Activated CD4-positive, alpha-beta T cell treated with anti-CD3 and anti-CD28 coated beads, Interleukin-2, amount 10 ng/mL, durations not matched to agents 7 days and 5 days (primary cell): ENCODE measurements at regions of chr12 and their contacts with region 1.

Region 1: GRCh38 chr12:54032627-54033100 is at the start of gene HOXC5:
- DNase-seq: peak; percentile 67
- H3K4me3 Mint-ChIP-seq: peak within 1 kb of the TSS; percentile 32
- H3K27ac Mint-ChIP-seq: peak within 1 kb of the TSS; percentile 28
- H3K4me1 Mint-ChIP-seq: peaks cover 27% of the 10 kb centered on the region
- H3K27me3 Mint-ChIP-seq: peaks cover 86% of the 10 kb centered on the region
- total RNA-seq, gene HOXC5: not detected

Region 2: DNA sequence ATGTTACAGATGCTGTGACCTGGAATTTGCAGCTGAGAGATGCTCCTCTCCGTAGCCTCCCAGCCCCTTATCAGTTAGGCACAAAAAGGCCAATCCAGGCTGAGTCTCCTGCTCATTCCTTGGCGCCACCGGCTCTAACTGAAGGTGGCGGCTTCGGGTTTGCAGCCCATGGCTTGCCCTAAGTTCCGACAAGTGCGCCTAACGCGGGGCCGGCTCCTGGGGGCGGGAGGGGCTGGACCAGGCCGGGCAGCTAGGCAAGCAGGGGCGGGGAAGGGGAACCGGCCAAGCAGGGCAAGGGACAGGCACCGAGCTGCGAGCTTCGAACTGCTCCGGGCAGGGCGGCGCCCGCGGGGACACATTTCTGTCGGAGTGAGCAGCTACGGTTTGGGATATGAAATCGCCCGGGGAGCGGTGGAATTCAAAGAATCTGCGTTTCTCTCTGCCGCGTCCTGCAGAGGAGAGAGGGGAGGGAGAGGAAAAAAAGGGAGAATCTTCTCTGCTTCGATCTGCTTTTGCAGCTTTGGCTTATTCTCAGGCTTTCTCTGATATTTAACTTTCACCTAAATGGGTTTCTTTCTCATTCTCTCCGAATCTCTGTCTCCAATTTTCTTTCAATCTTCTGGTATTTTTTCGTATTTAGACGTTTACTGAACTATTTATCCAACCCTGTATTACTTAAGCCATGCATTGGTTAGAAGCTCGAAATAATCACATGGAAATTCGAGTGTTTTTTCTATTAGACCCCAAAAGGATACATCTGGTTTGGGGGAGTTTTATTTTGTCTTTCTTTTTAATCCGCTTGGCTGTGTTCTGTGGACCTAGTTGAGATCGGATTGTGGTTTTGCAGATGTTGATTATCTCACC is 79.6 kb before region 1 on chr12:
- CTCF ChIA-PET with region 1: interaction called, 10 read pairs
- POLR2A ChIA-PET with region 1: no interaction called
- DNase-seq: no peak
- H3K4me3 Mint-ChIP-seq: peak overlapping the region; percentile 53
- H3K27ac Mint-ChIP-seq: peak overlapping the region; percentile 33
- H3K4me1 Mint-ChIP-seq: peaks cover 7% of the 10 kb centered on the region
- H3K27me3 Mint-ChIP-seq: peaks cover 95% of the 10 kb centered on the region

Region 3: DNA sequence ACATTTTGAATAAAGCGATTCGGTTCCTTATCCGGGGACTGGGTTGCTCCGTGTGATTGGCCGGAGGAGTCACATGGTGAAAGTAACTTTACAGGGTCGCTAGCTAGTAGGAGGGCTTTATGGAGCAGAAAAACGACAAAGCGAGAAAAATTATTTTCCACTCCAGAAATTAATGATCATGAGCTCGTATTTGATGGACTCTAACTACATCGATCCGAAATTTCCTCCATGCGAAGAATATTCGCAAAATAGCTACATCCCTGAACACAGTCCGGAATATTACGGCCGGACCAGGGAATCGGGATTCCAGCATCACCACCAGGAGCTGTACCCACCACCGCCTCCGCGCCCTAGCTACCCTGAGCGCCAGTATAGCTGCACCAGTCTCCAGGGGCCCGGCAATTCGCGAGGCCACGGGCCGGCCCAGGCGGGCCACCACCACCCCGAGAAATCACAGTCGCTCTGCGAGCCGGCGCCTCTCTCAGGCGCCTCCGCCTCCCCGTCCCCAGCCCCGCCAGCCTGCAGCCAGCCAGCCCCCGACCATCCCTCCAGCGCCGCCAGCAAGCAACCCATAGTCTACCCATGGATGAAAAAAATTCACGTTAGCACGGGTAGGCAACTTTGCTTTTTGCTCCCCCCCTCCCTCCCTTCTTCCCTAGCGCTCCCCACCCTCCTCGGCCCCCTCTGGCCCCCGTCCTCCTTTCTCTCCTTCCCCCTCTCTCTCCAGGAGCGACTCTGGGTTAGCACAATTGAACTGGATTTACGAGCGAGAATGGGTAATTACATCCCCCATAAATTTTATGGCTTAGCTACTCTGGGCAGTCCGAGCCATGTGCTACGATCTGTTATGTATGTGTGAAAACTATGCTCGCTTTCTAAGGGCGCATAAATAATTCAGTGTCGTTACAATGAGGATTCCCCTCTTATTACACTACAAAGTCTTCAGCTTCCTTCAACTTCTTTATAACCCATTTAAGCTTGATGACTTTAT is 21.4 kb after region 1 on chr12 and contains the start of gene HOXC4:
- CTCF ChIA-PET with region 1: interaction called, 25 read pairs
- POLR2A ChIA-PET with region 1: no interaction called
- DNase-seq: no peak
- H3K4me3 Mint-ChIP-seq: peak within 1 kb of the TSS; percentile 48
- H3K27ac Mint-ChIP-seq: peak within 1 kb of the TSS; percentile 69
- H3K4me1 Mint-ChIP-seq: peaks cover 27% of the 10 kb centered on the region
- H3K27me3 Mint-ChIP-seq: peaks cover 93% of the 10 kb centered on the region
- total RNA-seq, gene HOXC4: not detected

Region 4: DNA sequence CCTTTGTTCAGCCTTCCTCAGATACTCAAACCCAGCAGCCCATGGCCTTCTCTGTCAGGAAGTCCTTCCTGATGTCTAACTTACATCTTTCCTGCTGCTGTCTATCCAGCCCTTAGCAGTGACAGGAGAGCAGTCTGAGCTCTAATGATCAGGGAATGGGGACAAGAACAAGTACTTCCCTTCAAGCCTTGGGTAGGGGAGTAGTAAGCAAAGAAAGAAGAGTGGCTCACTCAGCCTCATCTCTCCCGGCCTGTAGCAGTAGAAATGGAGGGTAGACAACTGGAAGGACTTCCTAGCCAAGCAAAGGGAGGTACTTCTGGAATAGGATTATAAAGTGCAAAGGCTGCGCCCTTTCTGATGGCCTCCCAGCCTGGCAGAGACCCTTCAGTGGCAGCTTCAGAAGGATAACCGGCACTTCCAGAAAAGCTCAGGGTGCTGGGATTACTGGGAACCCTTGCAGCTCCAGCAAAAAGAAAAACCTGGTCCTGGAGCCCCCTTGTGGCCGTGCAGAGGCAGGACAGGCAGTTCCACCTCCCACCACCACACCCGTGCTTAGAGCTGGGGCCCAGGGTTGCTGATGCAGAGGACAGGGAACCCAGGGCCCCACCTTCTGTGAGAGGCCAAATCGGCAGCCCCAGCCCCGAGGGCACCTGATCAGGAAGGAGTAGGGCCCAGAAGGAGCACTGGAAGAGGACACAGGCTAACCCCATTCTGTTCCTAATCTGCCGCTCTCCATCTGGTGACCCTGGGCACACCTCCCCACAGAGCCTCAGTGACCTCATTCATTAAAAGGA is 168.5 kb after region 1 on chr12:
- CTCF ChIA-PET with region 1: interaction called, 29 read pairs
- POLR2A ChIA-PET with region 1: no interaction called
- DNase-seq: peak; percentile 68
- H3K4me3 Mint-ChIP-seq: no peak overlapping the region
- H3K27ac Mint-ChIP-seq: no peak overlapping the region
- H3K4me1 Mint-ChIP-seq: peaks cover 1% of the 10 kb centered on the region
- H3K27me3 Mint-ChIP-seq: peaks cover 54% of the 10 kb centered on the region

Region 5: DNA sequence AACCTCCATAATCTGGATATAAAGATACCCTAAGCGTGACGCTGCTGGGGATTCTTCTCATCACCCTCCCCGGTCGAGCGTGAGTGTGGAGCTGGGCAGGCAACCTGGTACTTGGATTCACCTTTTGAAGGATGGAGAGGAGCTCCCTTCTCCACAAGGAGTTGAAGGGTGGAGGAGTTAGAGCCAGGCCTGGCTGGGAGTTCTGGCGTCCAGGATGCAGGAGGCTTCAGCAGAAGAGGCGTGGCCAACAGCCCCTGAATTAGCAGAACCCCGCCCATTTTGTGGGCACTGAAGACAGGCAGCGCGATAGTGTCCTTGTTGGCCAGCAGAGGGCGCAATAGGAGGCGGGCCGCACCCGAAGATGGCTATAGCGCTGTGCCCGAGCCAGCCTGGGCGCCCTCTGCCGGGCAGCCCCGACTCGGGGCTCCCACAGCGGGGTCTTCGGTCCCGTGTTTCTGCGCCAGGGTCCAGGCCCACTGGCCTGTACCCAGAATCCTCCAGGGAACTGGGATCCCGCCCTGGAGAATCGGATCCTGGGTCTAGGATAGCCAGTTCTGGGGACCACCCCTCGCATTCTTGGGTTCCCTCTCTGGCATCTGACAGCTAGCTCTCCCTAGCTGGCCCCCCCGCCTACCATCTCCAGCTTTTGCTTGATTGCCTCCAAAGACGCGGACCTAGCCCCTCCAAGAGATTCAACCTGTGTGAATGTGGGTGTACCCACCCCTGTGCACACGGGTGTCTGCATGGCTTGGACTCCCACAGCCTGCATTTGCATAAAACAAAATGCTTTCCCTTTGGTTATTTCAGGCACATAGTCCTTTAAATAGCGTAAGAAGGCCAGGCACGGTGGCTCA is 182.1 kb after region 1 on chr12:
- CTCF ChIA-PET with region 1: interaction called, 11 read pairs
- POLR2A ChIA-PET with region 1: no interaction called
- DNase-seq: peak; percentile 94
- H3K4me3 Mint-ChIP-seq: peak overlapping the region; percentile 78
- H3K27ac Mint-ChIP-seq: no peak overlapping the region
- H3K4me1 Mint-ChIP-seq: peaks cover 44% of the 10 kb centered on the region
- H3K27me3 Mint-ChIP-seq: peaks cover 22% of the 10 kb centered on the region